GM18951 (cell line): ENCODE measurements at regions of chr3 and their contacts with region 1.

Region 1: GRCh38 chr3:140117096-140117526 is 182.1 kb downstream of the CLSTN2 start:
- POLR2A ChIP-seq: no peak

Region 2: GRCh38 chr3:140863580-140864009 is 746.5 kb after region 1 on chr3:
- in situ Hi-C with region 1: loop called (anchors 25 kb)
- POLR2A ChIP-seq: no peak